Vagina (tissue), 2 donors: ENCODE measurements at regions of chr6 and their contacts with region 1.

Region 1: DNA sequence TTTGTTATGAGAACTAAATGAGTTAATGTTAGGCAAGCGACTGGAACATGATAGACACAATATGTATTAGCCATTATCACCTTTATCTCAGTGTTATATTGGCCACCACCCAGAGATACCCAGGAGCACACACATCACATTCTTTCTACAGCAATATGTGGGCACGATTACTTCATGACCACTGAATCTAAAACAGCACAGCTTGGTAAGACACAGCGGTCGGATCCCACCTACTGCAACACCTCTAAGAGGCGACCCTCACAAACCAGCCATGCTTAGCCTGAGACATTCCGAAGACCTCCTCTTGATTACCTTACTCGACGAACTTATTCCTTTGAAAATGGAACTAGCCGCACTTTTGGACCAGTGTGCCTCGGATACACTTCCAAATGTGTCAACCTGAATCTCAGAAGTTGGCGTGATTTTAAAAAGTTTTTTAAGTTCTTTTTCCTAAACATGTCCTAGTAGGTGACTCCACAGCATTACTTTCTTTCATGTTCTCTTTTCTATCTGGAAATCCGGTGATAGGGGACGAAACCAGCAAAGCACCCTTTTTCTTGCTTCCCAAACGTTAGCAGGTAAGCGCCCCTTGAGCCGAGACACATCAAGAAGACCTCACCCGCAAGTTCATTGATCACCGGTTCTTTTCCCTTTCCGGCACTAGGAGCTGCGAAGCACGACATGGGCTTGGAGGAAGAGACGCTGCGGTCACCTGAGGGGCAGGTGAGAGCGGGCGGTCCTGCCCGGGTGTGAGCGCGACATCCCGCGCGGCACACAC is 900 bp downstream of the GMDS start:
- DNase-seq: peak in 1 of 2 donors; percentile 79
- H3K4me3 ChIP-seq: peak overlapping the region; percentile 95 to 97
- H3K27ac ChIP-seq: peak overlapping the region; percentile 93
- H3K4me1 ChIP-seq: peaks cover 11% of the 10 kb centered on the region
- H3K27me3 ChIP-seq: no peaks in the 10 kb centered on the region
- CTCF ChIP-seq: no peak
- POLR2A ChIP-seq: no peak

Region 2: GRCh38 chr6:3226848-3227362 is 982.4 kb after region 1 on chr6:
- intact Hi-C with region 1: loop called (anchors 5 kb)
- DNase-seq: no peak
- H3K4me3 ChIP-seq: peak overlapping the region; percentile 48 to 52
- H3K27ac ChIP-seq: no peak overlapping the region
- H3K4me1 ChIP-seq: peaks cover 56% of the 10 kb centered on the region
- H3K27me3 ChIP-seq: no peaks in the 10 kb centered on the region
- CTCF ChIP-seq: no peak
- POLR2A ChIP-seq: no peak